ENCODE measurements at regions of chr2 and their contacts with region 1.

Region 1: DNA sequence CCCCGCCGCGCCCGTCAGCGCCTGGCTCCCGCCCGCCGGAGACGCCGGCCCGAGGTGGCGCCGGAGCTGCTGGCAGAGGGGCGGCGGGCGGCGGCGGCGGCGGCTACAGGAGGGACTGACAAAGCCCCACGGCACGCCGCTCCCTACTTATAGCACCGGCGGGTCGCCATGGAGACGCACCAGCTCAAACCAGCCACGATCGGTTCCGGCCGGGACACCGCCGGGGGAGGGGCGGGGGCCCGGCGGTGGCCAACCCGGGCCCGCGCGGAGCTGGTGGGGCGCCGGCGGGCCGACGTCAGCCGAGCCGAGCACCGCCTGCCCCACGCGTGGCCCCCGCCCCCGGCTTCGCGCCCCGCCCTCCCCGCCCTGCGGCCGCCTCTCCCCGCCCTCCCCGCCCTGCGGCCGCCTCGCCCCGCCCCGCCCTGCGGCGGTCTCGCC is at the start of gene ODC1:
- DNase-seq: peak; percentile 97
- ATAC-seq: peak; percentile 92
- total RNA-seq, gene ODC1: 33.2 TPM

Region 2: GRCh38 chr2:10302479-10303180 is 145.6 kb before region 1 on chr2 and contains the start of gene HPCAL1:
- intact Hi-C with region 1: no loop called
- DNase-seq: peak; percentile 93
- ATAC-seq: peak; percentile 96
- total RNA-seq, gene HPCAL1: 34.3 TPM

Region 3: GRCh38 chr2:10378189-10378588 is 70.0 kb before region 1 on chr2:
- intact Hi-C with region 1: no loop called
- DNase-seq: no peak
- ATAC-seq: no peak

Region 4: GRCh38 chr2:10668402-10669012 is 220.3 kb after region 1 on chr2:
- intact Hi-C with region 1: loop called (anchors 5 kb)
- DNase-seq: no peak
- ATAC-seq: no peak